Mammary epithelial cell (primary cell): ENCODE measurements at regions of chr2 and their contacts with region 1.

Region 1: GRCh38 chr2:48107326-48107925 is 201.1 kb upstream of the FBXO11 start:
- DNase-seq: peak; percentile 91
- H3K4me3 ChIP-seq: no peak overlapping the region
- H3K27ac ChIP-seq: peak overlapping the region; percentile 89
- H3K4me1 ChIP-seq: peaks cover 39% of the 10 kb centered on the region
- H3K27me3 ChIP-seq: no peaks in the 10 kb centered on the region
- CTCF ChIP-seq: peak in 1 of 2 donors; percentile 17

Region 2: GRCh38 chr2:47437287-47437686 is 670.1 kb before region 1 on chr2:
- CTCF ChIA-PET with region 1: interaction called, 10 read pairs
- dilution Hi-C with region 1: no loop called
- in situ Hi-C with region 1: no loop called
- intact Hi-C with region 1: loop called (anchors 1 kb)
- DNase-seq: no peak
- H3K4me3 ChIP-seq: no peak overlapping the region
- H3K27ac ChIP-seq: no peak overlapping the region
- H3K4me1 ChIP-seq: no peaks in the 10 kb centered on the region
- H3K27me3 ChIP-seq: no peaks in the 10 kb centered on the region
- CTCF ChIP-seq: peak; percentile 19 to 52

Region 3: DNA sequence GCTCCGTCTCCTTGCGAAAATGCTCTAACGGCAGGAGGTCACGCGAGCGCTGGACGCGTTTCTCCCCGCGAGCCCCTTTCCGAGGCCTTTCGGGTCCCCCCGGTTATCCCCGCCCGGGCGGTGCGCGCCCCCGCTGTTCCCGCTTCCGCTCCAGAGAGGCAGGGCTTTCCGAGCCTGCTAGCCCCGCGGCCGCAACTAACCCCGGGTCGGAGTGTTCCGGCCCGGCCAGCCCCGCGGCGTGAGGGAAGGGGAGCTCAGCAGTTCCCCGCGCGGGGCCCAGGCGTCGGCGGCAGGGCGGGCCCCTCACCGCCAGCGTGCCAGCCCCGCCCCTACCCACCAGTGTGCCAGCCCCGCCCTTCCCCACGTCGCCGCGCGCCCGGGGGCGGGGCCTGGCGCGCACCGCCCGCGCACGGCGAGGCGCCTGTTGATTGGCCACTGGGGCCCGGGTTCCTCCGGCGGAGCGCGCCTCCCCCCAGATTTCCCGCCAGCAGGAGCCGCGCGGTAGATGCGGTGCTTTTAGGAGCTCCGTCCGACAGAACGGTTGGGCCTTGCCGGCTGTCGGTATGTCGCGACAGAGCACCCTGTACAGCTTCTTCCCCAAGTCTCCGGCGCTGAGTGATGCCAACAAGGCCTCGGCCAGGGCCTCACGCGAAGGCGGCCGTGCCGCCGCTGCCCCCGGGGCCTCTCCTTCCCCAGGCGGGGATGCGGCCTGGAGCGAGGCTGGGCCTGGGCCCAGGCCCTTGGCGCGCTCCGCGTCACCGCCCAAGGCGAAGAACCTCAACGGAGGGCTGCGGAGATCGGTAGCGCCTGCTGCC is 324.5 kb before region 1 on chr2 and contains the start of gene MSH6:
- CTCF ChIA-PET with region 1: no interaction called
- dilution Hi-C with region 1: loop called (anchors 5 kb)
- in situ Hi-C with region 1: no loop called
- intact Hi-C with region 1: loop called (anchors 1 kb)
- DNase-seq: peak; percentile 86
- H3K4me3 ChIP-seq: peak within 1 kb of the TSS; percentile 68 to 94 (median 94)
- H3K27ac ChIP-seq: peak within 1 kb of the TSS; percentile 71
- H3K4me1 ChIP-seq: peaks cover 6% of the 10 kb centered on the region
- H3K27me3 ChIP-seq: no peaks in the 10 kb centered on the region
- CTCF ChIP-seq: no peak
- total RNA-seq, gene MSH6: 25.2 to 63.8 TPM

Region 4: GRCh38 chr2:47850198-47850597 is 257.2 kb before region 1 on chr2:
- CTCF ChIA-PET with region 1: no interaction called
- dilution Hi-C with region 1: no loop called
- in situ Hi-C with region 1: loop called in 1 of 2 experiments (anchors 10 kb)
- intact Hi-C with region 1: no loop called
- DNase-seq: no peak
- H3K4me3 ChIP-seq: no peak overlapping the region
- H3K27ac ChIP-seq: no peak overlapping the region
- H3K4me1 ChIP-seq: no peaks in the 10 kb centered on the region
- H3K27me3 ChIP-seq: no peaks in the 10 kb centered on the region
- CTCF ChIP-seq: no peak

Region 5: GRCh38 chr2:48586479-48586878 is 479.1 kb after region 1 on chr2:
- CTCF ChIA-PET with region 1: no interaction called
- dilution Hi-C with region 1: no loop called
- in situ Hi-C with region 1: no loop called
- intact Hi-C with region 1: no loop called
- DNase-seq: no peak
- H3K4me3 ChIP-seq: no peak overlapping the region
- H3K27ac ChIP-seq: no peak overlapping the region
- H3K4me1 ChIP-seq: no peaks in the 10 kb centered on the region
- H3K27me3 ChIP-seq: no peaks in the 10 kb centered on the region
- CTCF ChIP-seq: no peak